ENCODE measurements at regions of chr22 and their contacts with region 1.

Region 1: DNA sequence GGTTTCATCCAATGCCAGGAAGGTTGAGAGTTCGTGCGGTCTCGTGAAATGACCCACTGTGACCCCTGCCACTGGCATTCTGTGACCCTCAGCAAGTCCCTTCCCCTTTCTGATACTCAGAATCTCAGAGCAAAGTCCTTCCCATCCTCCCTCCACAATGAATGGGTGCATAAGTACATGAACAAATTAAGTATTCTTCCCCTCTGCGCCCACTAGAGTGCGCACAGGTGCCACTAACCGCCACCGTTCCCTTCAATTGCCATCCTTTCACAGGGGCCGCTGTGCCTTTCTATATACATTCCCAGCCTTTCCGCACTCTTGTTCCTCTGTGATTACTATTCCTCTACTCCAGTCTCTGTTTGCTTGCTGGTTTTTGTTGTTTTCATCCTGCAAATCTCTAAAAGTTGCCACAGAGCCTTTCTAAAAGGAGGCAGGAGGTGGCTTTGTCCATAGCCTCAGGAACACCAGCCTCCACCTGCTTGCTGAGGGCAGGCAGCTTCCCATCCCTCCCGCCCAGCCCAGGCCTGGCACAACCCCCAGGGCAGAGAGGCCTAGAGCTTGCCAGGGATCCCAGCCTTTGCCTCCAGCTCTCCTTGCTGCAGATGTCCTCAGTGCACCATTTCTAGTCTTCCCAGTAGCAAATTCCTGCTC is 6.7 kb upstream of the AP1B1 start:
- DNase-seq: peak; percentile 88

Region 2: GRCh38 chr22:28817919-28818909 is 576.8 kb before region 1 on chr22:
- intact Hi-C with region 1: no loop called
- DNase-seq: peak; percentile 66

Region 3: GRCh38 chr22:29503811-29504372 is 108.8 kb after region 1 on chr22:
- intact Hi-C with region 1: loop called in 1 of 2 experiments (anchors 10 kb)
- DNase-seq: no peak

Measured in posterior vena cava (tissue), 2 donors.